Heart right ventricle (tissue), 16 donors: ENCODE measurements at regions of chr11 and their contacts with region 1.

Region 1: GRCh38 chr11:109960831-109961230 is 132.4 kb upstream of the ZC3H12C start:
- DNase-seq: peak; percentile 49 to 61
- ATAC-seq: peak; percentile 71 to 95 (median 88)
- H3K4me3 ChIP-seq: no peak overlapping the region
- H3K27ac ChIP-seq: peak overlapping the region in 1 of 10 donors; percentile 49
- H3K4me1 ChIP-seq: peaks cover 0 to 11% (median 0%) of the 10 kb centered on the region in 9 donors
- H3K27me3 ChIP-seq: no peaks in the 10 kb centered on the region
- CTCF ChIP-seq: no peak

Region 2: DNA sequence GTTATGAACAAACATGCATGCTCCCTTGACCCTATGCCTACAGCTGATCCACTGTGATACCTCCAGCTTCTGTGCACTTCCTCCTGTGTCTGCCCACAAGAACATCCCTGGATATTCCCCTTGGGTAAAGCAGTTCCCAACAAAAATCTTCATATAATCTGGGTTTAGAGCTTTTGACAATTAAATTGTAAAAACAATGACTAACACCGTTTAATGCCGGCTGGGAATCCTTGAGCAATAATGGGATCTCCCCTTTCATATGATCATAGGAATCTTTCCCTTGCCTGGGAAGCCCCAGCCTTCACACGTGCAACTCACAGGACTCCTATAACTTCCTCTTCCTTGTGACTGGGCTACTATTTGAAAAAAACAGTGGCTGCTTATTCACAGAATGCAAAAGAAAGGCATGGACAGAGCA is 126.1 kb after region 1 on chr11:
- intact Hi-C with region 1: loop called in 3 of 10 experiments (anchors 5 to 10 kb)
- DNase-seq: no peak
- ATAC-seq: peak in 1 of 8 donors; percentile 35
- H3K4me3 ChIP-seq: no peak overlapping the region
- H3K27ac ChIP-seq: no peak overlapping the region
- H3K4me1 ChIP-seq: peaks cover 0 to 19% (median 1%) of the 10 kb centered on the region in 9 donors
- H3K27me3 ChIP-seq: peaks cover 0 to 3% (median 0%) of the 10 kb centered on the region in 7 donors
- CTCF ChIP-seq: no peak

Region 3: GRCh38 chr11:110376711-110377324 is 416.0 kb after region 1 on chr11:
- intact Hi-C with region 1: loop called in 1 of 10 experiments (anchors 10 kb)
- DNase-seq: peak; percentile 51 to 85
- ATAC-seq: peak; percentile 68 to 92 (median 86)
- H3K4me3 ChIP-seq: peak overlapping the region in 4 of 10 donors; percentile 12 to 23 (median 20)
- H3K27ac ChIP-seq: peak overlapping the region in 7 of 10 donors; percentile 2 to 60 (median 34)
- H3K4me1 ChIP-seq: peaks cover 0 to 36% (median 13%) of the 10 kb centered on the region in 9 donors
- H3K27me3 ChIP-seq: no peaks in the 10 kb centered on the region
- CTCF ChIP-seq: peak; percentile 63 to 93 (median 83)